HepG2 (cell line): ENCODE measurements at regions of chr10 and their contacts with region 1.

Region 1: GRCh38 chr10:119320981-119321380 is 113.6 kb downstream of the GRK5 start:
- DNase-seq: no peak
- ATAC-seq: no peak
- H3K4me3 ChIP-seq: no peak overlapping the region
- H3K27ac ChIP-seq: no peak overlapping the region
- H3K4me1 ChIP-seq: peaks cover 87% of the 10 kb centered on the region
- H3K27me3 ChIP-seq: no peaks in the 10 kb centered on the region
- CTCF ChIP-seq: no peak
- EP300 ChIP-seq: no peak
- POLR2A ChIP-seq: no peak
- RAD21 ChIP-seq: no peak

Region 2: DNA sequence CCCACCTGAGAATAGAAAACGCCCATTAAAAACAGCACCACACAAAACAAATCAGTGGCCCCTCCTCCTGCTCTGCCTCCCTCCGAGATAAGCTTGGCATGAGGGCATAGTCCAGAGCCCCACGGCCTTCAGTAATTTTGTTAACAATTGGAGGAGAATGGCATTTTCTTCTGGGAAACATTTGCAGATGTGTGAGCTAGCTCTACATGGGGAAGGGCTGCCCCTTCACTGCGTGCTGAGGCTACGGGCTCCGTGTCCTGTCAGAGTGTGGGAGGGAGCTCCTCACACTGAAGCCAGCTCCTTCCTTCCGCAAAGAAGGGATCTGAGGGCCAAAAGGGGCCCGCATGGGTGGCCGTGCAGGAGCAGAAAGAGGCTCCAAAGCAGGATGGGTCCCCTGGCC is 98.4 kb before region 1 on chr10:
- CTCF ChIA-PET with region 1: no interaction called
- POLR2A ChIA-PET with region 1: interaction called, 10 read pairs
- in situ Hi-C with region 1: no loop called
- intact Hi-C with region 1: no loop called
- DNase-seq: peak; percentile 77
- ATAC-seq: peak; percentile 87
- H3K4me3 ChIP-seq: peak overlapping the region; percentile 40 to 69 (median 42); a peak in 5 of 6 replicates
- H3K27ac ChIP-seq: peak overlapping the region; percentile 60
- H3K4me1 ChIP-seq: peaks cover 50% of the 10 kb centered on the region
- H3K27me3 ChIP-seq: no peaks in the 10 kb centered on the region
- CTCF ChIP-seq: no peak
- EP300 ChIP-seq: no peak
- POLR2A ChIP-seq: no peak
- RAD21 ChIP-seq: no peak

Region 3: DNA sequence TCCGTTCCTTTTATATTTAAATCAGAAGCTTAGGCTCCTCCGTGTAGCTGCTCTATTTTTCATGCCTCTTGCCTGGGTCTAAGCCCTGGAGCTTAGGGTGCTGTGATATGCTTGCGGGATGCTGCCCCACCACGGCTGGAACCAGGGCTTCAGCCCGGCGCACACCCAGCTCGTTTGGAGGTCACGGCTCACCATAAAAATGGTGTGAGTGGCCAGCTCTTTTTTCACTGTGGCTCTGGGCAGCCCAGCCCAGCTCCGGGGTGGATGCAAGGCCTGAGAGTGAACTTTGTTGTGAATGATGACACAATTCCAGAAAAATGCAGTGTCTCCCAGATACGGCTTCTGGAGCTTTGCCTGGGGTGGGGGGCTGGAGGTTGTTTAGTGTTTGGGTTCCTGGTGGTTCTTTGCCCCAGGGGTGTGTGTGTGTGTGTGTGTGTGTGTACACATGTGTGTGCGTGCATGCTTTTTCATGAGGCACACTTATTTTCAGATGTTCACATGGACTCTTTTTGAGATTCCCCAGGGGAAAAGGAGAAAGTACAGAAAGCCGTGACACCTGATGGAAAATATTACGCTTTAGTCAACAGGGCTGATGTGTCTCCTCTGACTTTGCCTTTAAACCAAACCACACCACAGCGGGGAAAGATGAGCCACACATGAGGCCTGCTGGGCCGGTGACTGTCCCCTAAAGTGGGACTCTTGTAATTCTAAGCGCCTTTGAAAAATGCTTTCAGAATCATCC is 67.4 kb before region 1 on chr10:
- CTCF ChIA-PET with region 1: no interaction called
- POLR2A ChIA-PET with region 1: interaction called, 59 read pairs
- in situ Hi-C with region 1: no loop called
- intact Hi-C with region 1: loop called (anchors 1 kb)
- DNase-seq: peak; percentile 92
- ATAC-seq: peak; percentile 86
- H3K4me3 ChIP-seq: peak overlapping the region; percentile 39 to 70 (median 51); a peak in 5 of 6 replicates
- H3K27ac ChIP-seq: peak overlapping the region; percentile 90
- H3K4me1 ChIP-seq: peaks cover 74% of the 10 kb centered on the region
- H3K27me3 ChIP-seq: no peaks in the 10 kb centered on the region
- CTCF ChIP-seq: peak; percentile 33
- EP300 ChIP-seq: no peak; a peak in 1 of 4 replicates
- POLR2A ChIP-seq: no peak; a peak in 1 of 4 replicates
- RAD21 ChIP-seq: peak; percentile 41; the same call in 1 of the 2 replicates

Region 4: DNA sequence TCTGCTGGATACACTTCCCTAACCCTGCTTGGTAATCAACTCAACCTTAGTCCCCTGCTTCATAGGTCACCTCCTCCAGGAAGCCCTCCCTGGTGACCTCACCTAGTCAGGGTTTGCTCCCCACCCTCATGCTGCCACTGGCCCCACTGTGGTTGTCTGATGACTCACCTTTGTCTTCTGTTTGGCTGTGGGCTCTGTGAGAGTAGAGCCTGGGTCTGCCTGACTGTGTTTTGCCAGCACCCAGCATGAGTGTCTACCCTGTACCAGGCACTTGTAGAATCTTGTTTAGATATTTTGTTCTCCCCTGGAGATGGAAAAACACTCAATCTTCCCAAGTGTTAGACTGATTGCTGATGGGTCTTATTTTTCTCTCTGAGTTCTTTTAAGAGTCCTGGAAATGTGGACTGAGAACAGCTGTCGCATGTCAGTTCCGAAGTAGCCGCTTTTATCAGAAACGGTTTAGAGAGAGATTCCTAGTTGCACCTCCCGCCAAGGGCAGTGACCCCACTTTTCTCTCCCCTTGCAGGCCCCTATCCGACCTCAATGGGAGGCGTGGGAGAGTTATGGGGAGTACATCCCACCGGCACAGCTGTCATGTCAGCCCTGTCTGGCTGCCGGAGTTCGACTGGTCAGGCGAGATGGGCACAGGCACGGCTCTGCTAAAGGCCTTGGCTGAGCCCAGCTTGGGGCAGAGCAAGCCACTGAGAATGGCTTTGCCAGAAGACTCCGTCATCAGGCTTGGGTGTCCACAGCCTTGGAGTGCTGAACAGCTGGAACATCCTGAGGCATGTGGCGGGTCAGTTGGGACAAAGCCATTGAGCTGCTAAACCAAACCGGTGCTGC is 20.7 kb after region 1 on chr10:
- CTCF ChIA-PET with region 1: no interaction called
- POLR2A ChIA-PET with region 1: interaction called, 12 read pairs
- in situ Hi-C with region 1: no loop called
- intact Hi-C with region 1: loop called (anchors 2 kb)
- DNase-seq: peak; percentile 72
- ATAC-seq: peak; percentile 85
- H3K4me3 ChIP-seq: peak overlapping the region in 1 of 3 experiments; percentile 40; a peak in 1 of 6 replicates
- H3K27ac ChIP-seq: peak overlapping the region; percentile 69
- H3K4me1 ChIP-seq: peaks cover 49% of the 10 kb centered on the region
- H3K27me3 ChIP-seq: no peaks in the 10 kb centered on the region
- CTCF ChIP-seq: no peak; the same call in 1 of the 2 replicates
- EP300 ChIP-seq: 0 out of 4 replicates have a peak, but pooled peaks of 1 of the 2 experiments have one; percentile 4
- POLR2A ChIP-seq: no peak
- RAD21 ChIP-seq: no peak

Region 5: DNA sequence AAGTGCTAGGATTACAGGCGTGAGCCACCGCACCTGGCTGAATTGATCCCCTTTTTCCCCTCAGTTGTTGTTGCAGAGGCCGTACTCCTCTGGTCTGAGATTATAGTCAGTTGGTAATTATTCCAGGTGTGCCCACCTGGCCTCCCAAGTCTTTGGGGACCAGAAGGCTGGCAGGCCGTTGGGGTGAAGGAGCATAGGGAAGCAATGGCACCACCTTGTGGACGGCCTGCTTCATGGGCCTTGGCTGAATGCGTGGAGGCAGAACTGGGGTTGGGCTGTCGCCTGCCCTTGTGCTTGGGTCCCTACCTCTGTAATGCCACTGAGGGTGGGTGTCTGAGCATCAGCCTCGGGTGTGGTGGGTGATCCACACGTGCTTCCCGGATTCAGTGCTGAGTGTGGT is 95.9 kb after region 1 on chr10:
- CTCF ChIA-PET with region 1: no interaction called
- POLR2A ChIA-PET with region 1: interaction called, 11 read pairs
- in situ Hi-C with region 1: no loop called
- intact Hi-C with region 1: no loop called
- DNase-seq: peak; percentile 46
- ATAC-seq: peak; percentile 80
- H3K4me3 ChIP-seq: no peak overlapping the region
- H3K27ac ChIP-seq: no peak overlapping the region
- H3K4me1 ChIP-seq: peaks cover 16% of the 10 kb centered on the region
- H3K27me3 ChIP-seq: no peaks in the 10 kb centered on the region
- CTCF ChIP-seq: peak; percentile 97
- EP300 ChIP-seq: no peak
- POLR2A ChIP-seq: no peak
- RAD21 ChIP-seq: peak; percentile 93